Panc1 (cell line): ENCODE measurements at regions of chr7 and their contacts with region 1.

Region 1: DNA sequence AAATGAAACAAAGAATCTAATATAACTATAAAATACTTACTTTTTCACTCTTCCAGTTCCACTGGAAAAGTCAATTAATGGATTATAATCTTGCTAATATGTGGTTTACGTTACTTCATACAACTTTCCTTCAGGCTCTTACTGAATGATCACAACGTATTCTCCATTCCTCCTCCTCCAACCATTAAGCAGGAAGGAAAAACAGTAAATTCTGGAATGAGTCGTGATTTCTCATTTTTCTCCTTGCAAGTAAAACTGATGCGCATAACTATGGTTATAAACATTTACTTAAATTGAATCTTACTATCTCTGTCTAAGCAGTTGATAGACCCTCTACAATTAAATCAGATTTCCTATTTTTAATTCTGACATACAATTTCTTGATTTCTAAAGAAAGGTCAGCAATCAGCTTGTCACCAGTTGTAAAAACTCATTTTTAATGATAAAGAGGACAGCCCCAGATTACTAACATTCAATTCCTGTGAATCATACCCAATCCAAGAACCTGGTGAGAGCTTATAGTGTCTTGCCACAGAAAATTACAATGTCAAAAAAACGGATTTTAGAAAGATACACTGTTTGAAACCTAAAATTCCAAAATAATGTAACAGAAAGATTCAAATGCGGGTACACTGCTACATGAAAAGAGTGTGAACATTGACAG is 64.3 kb downstream of the EZH2 start:
- DNase-seq: no peak
- ATAC-seq: no peak
- H3K4me3 ChIP-seq: no peak overlapping the region
- H3K27ac ChIP-seq: no peak overlapping the region
- H3K4me1 ChIP-seq: no peaks in the 10 kb centered on the region
- H3K27me3 ChIP-seq: no peaks in the 10 kb centered on the region
- CTCF ChIP-seq: no peak

Region 2: DNA sequence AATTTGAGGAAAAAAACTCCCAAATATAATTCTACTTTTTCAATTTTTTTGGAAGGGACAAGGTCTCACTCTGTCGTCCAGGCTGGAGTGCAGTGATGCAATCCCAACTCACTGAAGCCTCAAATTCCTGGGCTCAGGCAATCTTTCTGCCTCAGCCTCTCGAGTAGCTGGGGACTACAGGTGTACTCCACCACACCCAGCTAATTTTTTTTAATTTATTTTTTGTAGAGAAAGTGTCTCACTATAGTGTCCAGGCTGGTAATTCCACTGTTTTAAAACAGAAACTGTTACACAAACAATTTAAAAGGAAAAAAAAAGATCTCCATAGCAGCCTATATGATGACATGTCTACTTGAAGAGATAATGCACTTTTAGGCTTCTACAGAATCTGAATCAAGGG is 38.7 kb after region 1 on chr7:
- CTCF ChIA-PET with region 1: no interaction called
- POLR2A ChIA-PET with region 1: interaction called, 10 read pairs
- in situ Hi-C with region 1: no loop called
- intact Hi-C with region 1: no loop called
- DNase-seq: no peak
- ATAC-seq: no peak
- H3K4me3 ChIP-seq: no peak overlapping the region
- H3K27ac ChIP-seq: no peak overlapping the region
- H3K4me1 ChIP-seq: peaks cover 13% of the 10 kb centered on the region; the same call in 1 of the 2 replicates
- H3K27me3 ChIP-seq: no peaks in the 10 kb centered on the region
- CTCF ChIP-seq: no peak